K562 (cell line): ENCODE measurements at regions of chr19 and their contacts with region 1.

Region 1: GRCh38 chr19:49845414-49845813 is 5.5 kb upstream of the PTOV1 start:
- DNase-seq: no peak
- ATAC-seq: no peak
- H3K4me3 ChIP-seq: no peak overlapping the region
- H3K27ac ChIP-seq: no peak overlapping the region
- H3K4me1 ChIP-seq: peaks cover 28 to 31% of the 10 kb centered on the region in 2 experiments
- H3K27me3 ChIP-seq: no peaks in the 10 kb centered on the region
- CTCF ChIP-seq: no peak
- EP300 ChIP-seq: no peak
- POLR2A ChIP-seq: no peak
- RAD21 ChIP-seq: 0 out of 4 replicates have a peak, but pooled peaks of 1 of the 2 experiments have one; percentile 4

Region 2: DNA sequence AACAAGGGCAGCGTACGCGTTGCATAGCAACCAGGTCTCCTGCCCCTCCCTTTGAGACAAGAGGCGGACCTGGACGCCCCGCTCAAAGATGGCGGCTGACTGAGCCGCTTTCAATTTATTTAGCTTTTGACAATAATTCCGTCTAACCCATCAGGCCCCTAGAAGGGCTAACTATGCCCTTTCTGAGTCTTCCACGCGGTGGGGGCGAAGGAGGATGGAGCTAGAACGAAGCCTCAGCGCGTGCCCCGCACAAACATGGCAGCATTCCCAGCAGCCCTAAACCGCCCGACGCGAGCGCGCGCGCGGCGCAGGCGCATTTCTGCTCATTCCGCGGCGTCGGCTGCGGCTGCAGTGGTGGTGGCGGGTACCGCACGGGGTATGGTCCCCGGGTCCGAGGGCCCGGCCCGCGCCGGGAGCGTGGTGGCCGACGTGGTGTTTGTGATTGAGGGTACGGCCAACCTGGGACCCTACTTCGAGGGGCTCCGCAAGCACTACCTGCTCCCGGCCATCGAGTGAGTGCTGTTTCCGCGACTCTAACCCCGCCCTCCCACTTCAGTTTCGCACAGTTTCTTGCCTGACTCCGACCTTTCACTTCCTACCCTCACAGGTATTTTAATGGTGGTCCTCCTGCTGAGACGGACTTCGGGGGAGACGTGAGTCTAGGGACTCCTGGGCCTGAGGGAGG is 27.3 kb before region 1 on chr19 and contains the start of gene MED25:
- CTCF ChIA-PET with region 1: no interaction called
- POLR2A ChIA-PET with region 1: interaction called, 6 read pairs
- in situ Hi-C with region 1: no loop called
- intact Hi-C with region 1: loop called (anchors 2 kb)
- DNase-seq: peak; percentile 79 to 93 (median 84)
- ATAC-seq: peak; percentile 91
- H3K4me3 ChIP-seq: peak within 1 kb of the TSS; percentile 86
- H3K27ac ChIP-seq: peak within 1 kb of the TSS; percentile 90
- H3K4me1 ChIP-seq: peaks cover 17 to 40% of the 10 kb centered on the region in 2 experiments
- H3K27me3 ChIP-seq: no peaks in the 10 kb centered on the region
- CTCF ChIP-seq: peak in 1 of 3 experiments; percentile 22; a peak in 1 of 6 replicates
- EP300 ChIP-seq: no peak
- POLR2A ChIP-seq: peak; percentile 73
- RAD21 ChIP-seq: no peak
- polyA plus RNA-seq, gene MED25: 4.1 to 4.4 TPM